ENCODE measurements at regions of chr3 and their contacts with region 1.

Region 1: GRCh38 chr3:123328851-123329635 is 119.8 kb downstream of the ADCY5 start:
- DNase-seq: peak; percentile 64
- H3K4me3 ChIP-seq: no peak overlapping the region
- H3K27ac ChIP-seq: no peak overlapping the region
- H3K4me1 ChIP-seq: no peaks in the 10 kb centered on the region
- CTCF ChIP-seq: peak; percentile 94

Region 2: DNA sequence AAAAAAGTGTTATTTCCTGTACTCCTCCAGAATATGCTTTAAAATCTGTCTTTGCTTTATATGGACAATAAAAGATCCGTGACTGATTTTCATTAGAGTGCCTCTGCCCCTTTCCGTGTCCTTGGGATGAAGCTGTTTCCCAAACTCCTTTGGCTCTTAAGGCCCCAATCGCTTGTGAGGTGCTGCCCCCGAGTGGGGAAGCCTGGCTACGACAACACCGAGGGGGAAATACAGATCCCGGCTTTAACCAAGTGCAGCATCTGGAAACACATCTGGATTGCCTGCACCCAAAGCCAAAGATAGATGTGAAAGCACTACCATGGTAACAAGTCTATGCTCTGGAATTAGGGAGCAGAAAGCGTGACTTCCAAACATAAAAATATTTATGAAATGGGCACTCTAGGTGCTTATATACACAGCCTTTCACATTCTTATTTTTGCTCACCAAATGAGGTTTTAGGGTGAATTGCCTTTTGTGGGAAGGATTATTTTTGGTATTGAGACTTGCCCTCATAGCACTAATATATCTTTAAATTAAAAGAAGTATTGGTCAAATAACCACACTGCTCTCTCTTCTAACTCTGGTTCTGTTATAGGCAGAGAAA is 160.5 kb after region 1 on chr3:
- CTCF ChIA-PET with region 1: no interaction called
- POLR2A ChIA-PET with region 1: no interaction called
- intact Hi-C with region 1: loop called (anchors 1 kb)
- DNase-seq: peak; percentile 47
- H3K4me3 ChIP-seq: no peak overlapping the region
- H3K27ac ChIP-seq: no peak overlapping the region
- H3K4me1 ChIP-seq: no peaks in the 10 kb centered on the region
- CTCF ChIP-seq: peak; percentile 91

Region 3: DNA sequence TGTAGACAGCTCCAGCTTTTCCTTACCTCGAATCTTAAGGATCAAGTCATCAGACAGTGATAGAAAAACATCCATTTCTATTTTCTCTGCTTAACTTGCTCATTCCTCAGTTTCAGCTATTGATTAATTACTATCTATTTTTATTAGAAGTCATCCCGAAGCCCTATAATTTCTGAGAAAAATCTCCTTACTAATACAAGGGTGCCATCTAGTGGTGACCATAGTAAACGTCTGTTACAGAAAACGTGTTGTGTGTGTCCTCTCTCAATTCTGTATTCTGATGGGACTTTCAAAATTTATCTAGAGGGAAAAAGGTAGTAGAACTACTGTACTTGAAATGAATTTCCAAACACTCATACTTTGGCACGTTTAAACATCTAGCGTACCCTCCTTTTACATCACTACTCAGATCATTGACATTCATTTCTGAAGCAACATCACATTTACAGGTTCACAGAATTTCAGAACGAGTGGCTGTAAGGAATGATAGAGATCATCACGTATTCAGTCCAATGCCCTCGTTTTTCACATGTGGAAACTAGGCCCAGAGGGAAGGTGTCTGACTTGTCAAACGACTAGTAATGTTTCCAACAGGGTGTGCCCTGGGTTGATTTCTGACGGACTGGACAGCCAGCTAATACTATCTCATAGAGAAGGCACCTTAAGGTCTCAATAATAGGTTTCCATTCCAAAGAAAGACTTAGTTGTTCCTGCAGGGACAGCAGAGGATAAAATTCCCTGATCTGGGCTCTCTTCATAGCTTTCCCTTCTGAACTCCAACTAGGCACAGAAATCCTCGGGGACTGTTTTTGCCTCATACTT is 230.2 kb after region 1 on chr3:
- CTCF ChIA-PET with region 1: no interaction called
- POLR2A ChIA-PET with region 1: no interaction called
- intact Hi-C with region 1: loop called (anchors 2 kb)
- DNase-seq: peak; percentile 66
- H3K4me3 ChIP-seq: no peak overlapping the region
- H3K27ac ChIP-seq: no peak overlapping the region
- H3K4me1 ChIP-seq: no peaks in the 10 kb centered on the region
- CTCF ChIP-seq: peak; percentile 96